ENCODE measurements at regions of chr9 and their contacts with region 1.

Region 1: GRCh38 chr9:30103647-30104394 is 2280.6 kb upstream of the ACO1 start:
- DNase-seq: no peak
- ATAC-seq: no peak
- H3K4me3 Mint-ChIP-seq: no peak overlapping the region
- H3K27ac Mint-ChIP-seq: no peak overlapping the region
- H3K4me1 Mint-ChIP-seq: no peaks in the 10 kb centered on the region
- H3K27me3 Mint-ChIP-seq: no peaks in the 10 kb centered on the region

Region 2: GRCh38 chr9:30140407-30140806 is 36.6 kb after region 1 on chr9:
- CTCF ChIA-PET with region 1: no interaction called
- POLR2A ChIA-PET with region 1: no interaction called
- intact Hi-C with region 1: loop called in 1 of 2 experiments (anchors 10 kb)
- DNase-seq: no peak
- ATAC-seq: no peak
- H3K4me3 Mint-ChIP-seq: no peak overlapping the region
- H3K27ac Mint-ChIP-seq: no peak overlapping the region
- H3K4me1 Mint-ChIP-seq: no peaks in the 10 kb centered on the region
- H3K27me3 Mint-ChIP-seq: no peaks in the 10 kb centered on the region

Region 3: GRCh38 chr9:30178586-30178985 is 74.8 kb after region 1 on chr9:
- CTCF ChIA-PET with region 1: no interaction called
- POLR2A ChIA-PET with region 1: no interaction called
- intact Hi-C with region 1: no loop called
- DNase-seq: no peak
- ATAC-seq: no peak
- H3K4me3 Mint-ChIP-seq: no peak overlapping the region
- H3K27ac Mint-ChIP-seq: no peak overlapping the region
- H3K4me1 Mint-ChIP-seq: no peaks in the 10 kb centered on the region
- H3K27me3 Mint-ChIP-seq: no peaks in the 10 kb centered on the region

Measured in activated CD4-positive, alpha-beta T cell treated with anti-CD3 and anti-CD28 coated beads for 36 hours (primary cell).